ENCODE measurements at regions of chr20 and their contacts with region 1.

Region 1: DNA sequence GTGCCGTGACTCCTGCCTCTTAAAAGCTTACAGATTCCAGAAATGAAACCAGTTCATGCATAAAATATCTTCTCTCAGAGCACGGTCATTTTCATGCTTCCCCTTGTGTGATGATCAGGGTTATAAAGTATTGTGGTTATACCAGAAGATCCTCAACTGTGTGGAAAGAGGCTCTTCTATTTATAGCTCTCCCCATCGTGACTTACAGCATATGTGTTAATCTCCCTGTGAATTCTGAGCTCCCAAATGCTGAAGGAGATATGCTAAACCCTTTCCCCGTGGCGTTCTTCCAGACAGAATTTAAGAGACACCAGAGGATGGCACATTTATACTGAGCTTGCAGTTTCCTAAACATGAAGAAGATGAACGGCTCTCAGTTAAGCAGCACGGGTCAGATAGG is 158.8 kb downstream of the CDH26 start:
- DNase-seq: no peak
- ATAC-seq: no peak
- H3K4me3 ChIP-seq: no peak overlapping the region
- H3K27ac ChIP-seq: no peak overlapping the region
- H3K4me1 ChIP-seq: no peaks in the 10 kb centered on the region
- CTCF ChIP-seq: no peak
- EP300 ChIP-seq: no peak
- POLR2A ChIP-seq: no peak
- RAD21 ChIP-seq: no peak

Region 2: GRCh38 chr20:59972037-59972801 is 144.8 kb before region 1 on chr20:
- CTCF ChIA-PET with region 1: no interaction called
- POLR2A ChIA-PET with region 1: no interaction called
- DNase-seq: no peak
- ATAC-seq: no peak
- H3K4me3 ChIP-seq: no peak overlapping the region
- H3K27ac ChIP-seq: no peak overlapping the region
- H3K4me1 ChIP-seq: no peaks in the 10 kb centered on the region
- CTCF ChIP-seq: no peak
- EP300 ChIP-seq: no peak
- POLR2A ChIP-seq: no peak
- RAD21 ChIP-seq: no peak

Region 3: GRCh38 chr20:60137629-60138245 is 20.7 kb after region 1 on chr20:
- CTCF ChIA-PET with region 1: interaction called, 18 read pairs
- POLR2A ChIA-PET with region 1: no interaction called
- DNase-seq: peak; percentile 11 to 23
- ATAC-seq: peak; percentile 45 to 65; a peak in 2 of 6 replicates
- H3K4me3 ChIP-seq: no peak overlapping the region
- H3K27ac ChIP-seq: no peak overlapping the region
- H3K4me1 ChIP-seq: no peaks in the 10 kb centered on the region
- CTCF ChIP-seq: peak; percentile 42; the same call in 2 of the 3 replicates
- EP300 ChIP-seq: no peak
- POLR2A ChIP-seq: no peak
- RAD21 ChIP-seq: peak; percentile 16 to 52; a peak in 2 of 5 replicates

Region 4: GRCh38 chr20:60453388-60454246 is 336.6 kb after region 1 on chr20:
- CTCF ChIA-PET with region 1: no interaction called
- POLR2A ChIA-PET with region 1: no interaction called
- DNase-seq: no peak
- ATAC-seq: 0 out of 6 replicates have a peak, but pooled peaks of 1 of the 2 experiments have one; percentile 32
- H3K4me3 ChIP-seq: no peak overlapping the region
- H3K27ac ChIP-seq: no peak overlapping the region
- H3K4me1 ChIP-seq: no peaks in the 10 kb centered on the region
- CTCF ChIP-seq: no peak
- EP300 ChIP-seq: no peak
- POLR2A ChIP-seq: no peak
- RAD21 ChIP-seq: 0 out of 5 replicates have a peak, but pooled peaks of 1 of the 2 experiments have one; percentile 16